ENCODE measurements at regions of chr12 and their contacts with region 1.

Region 1: GRCh38 chr12:27733052-27733656 is 22.5 kb downstream of the MRPS35 start:
- DNase-seq: peak in 3 of 10 donors; percentile 23 to 79 (median 27)

Region 2: GRCh38 chr12:27821259-27821973 is 88.3 kb after region 1 on chr12:
- intact Hi-C with region 1: loop called (anchors 1 kb)
- DNase-seq: peak in 1 of 10 donors; percentile 33

Region 3: DNA sequence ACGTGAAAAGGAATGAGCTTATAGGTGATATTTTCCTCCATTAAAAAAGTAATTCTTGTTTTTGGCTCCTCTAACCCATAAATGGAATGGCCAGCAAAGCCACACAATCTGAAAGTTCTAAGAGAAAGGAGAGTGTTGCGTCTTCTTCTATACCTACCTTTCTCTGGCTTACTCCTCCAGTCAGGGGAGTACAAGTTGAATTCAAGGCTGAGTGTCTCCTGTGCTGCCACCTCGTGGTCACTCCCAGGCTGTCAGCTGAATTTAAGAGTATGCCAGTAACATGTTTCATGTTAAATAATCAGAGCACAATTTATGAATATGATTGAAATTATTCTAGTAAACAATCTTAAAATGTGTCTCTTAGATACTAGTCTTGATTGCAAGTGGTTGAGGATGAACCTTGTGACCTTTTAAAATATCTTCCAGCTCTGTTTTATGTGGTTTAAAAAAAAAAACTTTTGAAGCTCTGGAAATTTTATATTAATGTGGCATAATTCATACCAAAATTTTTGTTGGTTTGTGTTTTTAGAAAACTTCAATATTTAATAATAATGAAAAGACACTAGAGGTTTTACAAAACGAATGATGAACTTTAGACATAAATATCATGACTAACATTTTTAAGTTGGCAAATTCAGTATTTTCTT is 207.7 kb after region 1 on chr12:
- intact Hi-C with region 1: loop called (anchors 10 kb)
- DNase-seq: peak; percentile 22 to 94 (median 62)

Region 4: DNA sequence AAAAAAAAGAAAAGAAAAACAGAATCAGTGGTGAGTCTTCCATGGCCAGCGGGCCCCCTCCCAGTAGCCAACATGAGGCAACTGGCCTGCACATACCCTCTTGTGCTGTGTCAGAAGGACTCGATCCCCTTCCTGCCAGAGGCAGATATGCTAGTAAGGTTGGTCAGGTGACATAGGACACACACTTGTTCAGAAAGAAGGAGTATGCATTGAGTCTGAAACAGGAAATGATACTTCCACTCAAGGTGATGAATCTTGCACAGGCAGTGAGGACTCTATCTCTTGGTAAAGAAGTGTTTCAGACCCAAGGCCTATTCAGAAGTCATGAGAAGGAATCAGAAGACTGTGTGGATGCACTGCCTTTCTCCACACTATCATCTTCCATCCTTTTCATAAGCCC is 1146.2 kb after region 1 on chr12:
- intact Hi-C with region 1: loop called (anchors 5 kb)
- DNase-seq: no peak

Measured in posterior cingulate gyrus (tissue), 11 donors.